ENCODE measurements at regions of chr12 and their contacts with region 1.

Region 1: DNA sequence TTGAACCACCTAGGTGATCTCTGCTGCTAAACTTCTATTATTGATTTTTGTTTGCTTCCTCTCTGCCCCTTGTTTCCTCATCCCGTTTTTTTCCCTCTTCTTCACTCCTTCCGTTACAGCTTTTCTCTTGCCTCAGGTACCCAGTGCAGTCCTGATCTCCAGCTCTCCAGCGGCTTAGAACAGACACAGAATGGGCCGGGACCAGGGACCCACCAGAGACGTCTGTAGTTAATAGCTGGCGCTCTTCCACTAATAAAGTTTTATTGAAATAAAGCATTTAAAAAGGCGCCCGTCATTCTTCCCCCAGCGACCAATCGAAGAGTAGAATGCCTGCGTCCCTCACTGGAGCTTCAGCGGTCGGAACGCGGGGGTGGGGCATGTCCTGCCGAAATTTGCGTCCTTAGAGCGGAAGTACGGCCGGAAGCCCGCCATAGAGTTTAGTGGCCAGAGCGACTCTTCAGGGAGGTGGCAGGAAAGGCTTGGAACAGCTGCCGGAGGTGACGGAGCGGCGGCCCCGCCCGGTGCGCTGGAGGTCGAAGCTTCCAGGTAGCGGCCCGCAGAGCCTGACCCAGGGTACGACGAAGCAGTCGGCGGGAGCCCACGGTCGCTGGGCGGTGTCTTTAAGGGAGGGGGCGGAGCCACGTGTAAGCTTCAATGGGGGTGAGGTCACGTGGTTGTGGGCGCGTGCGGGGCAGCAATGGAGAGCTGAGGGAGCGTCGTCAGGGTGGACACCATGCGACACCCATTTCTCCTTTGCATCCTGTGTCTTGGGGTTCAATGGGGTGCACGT is at the start of gene COPS7A:
- DNase-seq: peak; percentile 99
- ATAC-seq: peak; percentile 95
- H3K4me3 Mint-ChIP-seq: peak within 1 kb of the TSS; percentile 79
- H3K27ac Mint-ChIP-seq: peak within 1 kb of the TSS; percentile 89
- H3K4me1 Mint-ChIP-seq: peaks cover 21% of the 10 kb centered on the region
- H3K27me3 Mint-ChIP-seq: no peaks in the 10 kb centered on the region
- total RNA-seq, gene COPS7A: 28.2 to 30.0 TPM

Region 2: DNA sequence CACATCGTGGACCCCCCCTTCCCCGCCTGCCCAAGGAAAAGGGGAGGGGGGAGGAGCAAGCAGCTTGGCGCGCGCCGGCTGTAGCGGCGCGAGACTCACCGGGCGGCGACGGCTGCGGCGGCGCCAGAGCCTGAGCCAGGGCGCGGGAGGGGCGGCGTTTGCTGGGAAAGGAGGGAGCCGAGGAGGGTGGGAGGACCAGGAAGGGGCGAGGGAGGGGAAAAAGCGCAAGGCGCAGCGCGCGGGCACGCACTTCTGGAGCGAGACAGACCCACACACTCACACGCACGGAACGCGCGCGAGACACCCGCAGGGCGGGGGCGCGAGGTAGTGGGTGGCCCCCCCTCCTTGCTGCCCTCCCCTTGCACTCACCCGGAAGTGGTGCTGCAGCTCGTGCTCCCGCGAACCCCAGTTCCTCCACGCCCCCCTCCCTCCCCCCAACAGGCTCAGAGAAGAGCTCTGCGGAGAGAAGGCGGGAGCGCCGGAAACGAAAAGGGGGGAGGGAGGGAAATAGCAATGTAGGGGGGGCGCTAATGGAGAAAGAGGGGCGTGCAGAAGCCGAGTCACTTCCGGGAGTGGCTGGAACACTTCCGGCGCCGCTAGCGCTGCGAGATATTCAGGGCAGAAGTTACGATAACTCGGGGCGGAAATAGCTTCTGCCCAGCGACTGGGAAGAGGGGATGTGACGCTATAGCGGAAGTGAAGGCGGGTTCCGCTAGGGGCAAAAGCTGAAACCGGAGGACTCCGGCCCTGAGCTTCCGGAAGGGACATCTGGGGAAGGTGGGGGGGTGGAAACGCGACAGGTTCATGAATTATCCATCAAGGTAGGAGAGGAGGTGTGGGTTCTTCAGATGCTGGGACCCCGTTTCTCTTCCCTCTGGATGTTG is 34.6 kb before region 1 on chr12 and contains the start of gene ZNF384:
- CTCF ChIA-PET with region 1: interaction called, 16 read pairs
- DNase-seq: peak; percentile 99
- ATAC-seq: peak; percentile 84
- H3K4me3 Mint-ChIP-seq: peak within 1 kb of the TSS; percentile 96
- H3K27ac Mint-ChIP-seq: peak within 1 kb of the TSS; percentile 96
- H3K4me1 Mint-ChIP-seq: peaks cover 44% of the 10 kb centered on the region
- H3K27me3 Mint-ChIP-seq: no peaks in the 10 kb centered on the region
- total RNA-seq, gene ZNF384: 76.3 to 76.4 TPM

Region 3: DNA sequence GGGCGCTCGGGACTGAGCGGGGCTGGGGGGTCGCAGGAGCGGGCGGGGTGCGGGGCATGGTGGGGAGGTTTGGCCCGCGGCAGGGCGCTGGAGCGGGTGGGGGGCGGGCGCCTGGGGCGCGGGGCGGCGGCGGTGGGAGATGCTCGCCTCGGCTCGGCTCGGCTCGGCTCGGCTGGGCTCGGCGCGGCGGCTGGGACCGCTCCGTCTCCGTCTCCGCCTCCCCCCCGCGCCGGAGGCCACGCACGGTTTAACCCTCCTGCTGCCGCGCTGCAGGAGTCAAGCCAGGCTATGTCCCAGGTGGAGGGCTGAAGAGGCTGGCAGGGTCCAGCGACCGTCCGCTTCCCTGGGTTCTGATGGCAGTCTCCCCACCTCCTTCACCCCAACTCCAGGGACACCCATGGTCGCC is 23.2 kb before region 1 on chr12 and contains the start of gene PIANP:
- CTCF ChIA-PET with region 1: no interaction called
- DNase-seq: peak; percentile 53
- ATAC-seq: peak; percentile 80
- H3K4me3 Mint-ChIP-seq: peak within 1 kb of the TSS; percentile 32
- H3K27ac Mint-ChIP-seq: no peak within 1 kb of the TSS
- H3K4me1 Mint-ChIP-seq: peaks cover 19% of the 10 kb centered on the region
- H3K27me3 Mint-ChIP-seq: peaks cover 67% of the 10 kb centered on the region
- total RNA-seq, gene PIANP: not detected

Region 4: GRCh38 chr12:6764011-6764828 is 40.4 kb after region 1 on chr12:
- CTCF ChIA-PET with region 1: interaction called, 11 read pairs
- DNase-seq: peak; percentile 87
- ATAC-seq: peak; percentile 82
- H3K4me3 Mint-ChIP-seq: peak overlapping the region; percentile 62
- H3K27ac Mint-ChIP-seq: peak overlapping the region; percentile 39
- H3K4me1 Mint-ChIP-seq: peaks cover 40% of the 10 kb centered on the region
- H3K27me3 Mint-ChIP-seq: peaks cover 30% of the 10 kb centered on the region

Region 5: GRCh38 chr12:6771091-6771495 is 47.3 kb after region 1 on chr12:
- CTCF ChIA-PET with region 1: interaction called, 11 read pairs
- DNase-seq: no peak
- ATAC-seq: no peak
- H3K4me3 Mint-ChIP-seq: no peak overlapping the region
- H3K27ac Mint-ChIP-seq: peak overlapping the region; percentile 90
- H3K4me1 Mint-ChIP-seq: peaks cover 47% of the 10 kb centered on the region
- H3K27me3 Mint-ChIP-seq: no peaks in the 10 kb centered on the region

Region 6: DNA sequence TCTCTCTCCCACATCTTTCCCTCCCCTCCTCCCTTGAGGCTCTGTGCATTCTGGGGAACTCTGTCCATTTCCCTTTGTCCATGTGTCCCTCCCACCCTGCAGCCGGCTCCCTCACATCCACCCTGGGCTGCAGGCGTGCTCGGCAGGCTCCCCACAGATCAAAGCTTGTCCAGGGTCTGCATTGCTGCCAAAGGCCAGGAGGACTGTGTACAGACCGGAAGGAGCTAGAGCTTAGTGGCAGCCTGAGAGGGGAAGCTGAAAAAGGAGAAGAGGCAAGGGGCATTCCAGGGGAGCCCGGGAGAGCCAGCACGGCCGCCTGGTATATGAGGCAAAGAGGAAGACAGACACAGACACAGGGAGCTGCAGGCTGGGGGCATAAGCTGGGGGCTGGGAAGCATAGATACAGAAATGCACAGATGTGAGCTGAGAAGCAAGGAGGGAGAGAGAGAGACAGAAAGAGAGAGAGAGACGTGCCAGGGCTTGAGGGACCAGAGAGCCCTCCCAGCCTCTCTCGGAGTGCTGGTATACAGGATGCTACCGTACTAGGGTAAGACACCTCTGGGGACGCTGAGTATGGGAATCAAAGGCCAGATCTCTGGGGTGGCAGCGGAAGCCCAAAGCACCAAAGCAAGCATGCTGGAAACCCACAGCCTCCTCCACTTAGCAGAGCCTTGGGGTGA is 68.9 kb after region 1 on chr12:
- CTCF ChIA-PET with region 1: no interaction called
- DNase-seq: no peak
- ATAC-seq: peak; percentile 43
- H3K4me3 Mint-ChIP-seq: no peak overlapping the region
- H3K27ac Mint-ChIP-seq: no peak overlapping the region
- H3K4me1 Mint-ChIP-seq: peaks cover 23% of the 10 kb centered on the region
- H3K27me3 Mint-ChIP-seq: peaks cover 29% of the 10 kb centered on the region